Naive thymus-derived CD4-positive, alpha-beta T cell (primary cell): ENCODE measurements at regions of chr17 and their contacts with region 1.

Region 1: DNA sequence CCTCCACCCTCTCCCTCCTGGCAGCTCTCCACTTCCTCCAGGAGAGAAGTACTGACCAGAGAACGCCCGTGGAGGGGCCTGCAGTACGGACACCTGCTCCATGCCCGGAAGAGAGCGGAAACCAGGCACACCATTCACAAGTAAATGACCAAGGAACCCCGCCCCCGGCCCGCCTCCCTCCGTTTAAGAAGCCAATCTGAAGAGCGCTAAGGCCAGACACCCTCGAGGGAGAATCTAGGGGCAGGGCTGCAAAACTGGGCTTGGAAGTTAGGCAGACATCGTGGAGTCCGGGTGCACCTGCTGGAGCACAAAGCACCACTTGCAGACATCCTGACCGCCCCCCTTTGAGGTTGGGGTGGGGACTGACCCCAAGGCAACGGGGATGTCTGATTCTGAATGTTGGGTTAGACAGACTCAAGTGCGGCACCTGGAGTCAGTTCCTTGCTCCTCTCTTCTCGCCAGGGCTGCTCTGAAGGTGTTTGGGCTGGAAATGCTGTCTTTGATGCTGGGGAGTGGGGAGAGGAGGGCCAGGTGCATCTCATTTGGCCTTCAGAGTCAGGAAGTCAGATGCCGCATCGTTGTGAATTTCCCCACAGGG is 964 bp upstream of the FAAP100 start:
- DNase-seq: peak; percentile 34 to 83 (median 75)
- ATAC-seq: peak; percentile 77
- H3K4me3 ChIP-seq: peak overlapping the region; percentile 77
- H3K4me3 Mint-ChIP-seq: peak overlapping the region; percentile 88 to 93 (median 90)
- H3K27ac ChIP-seq: peak overlapping the region; percentile 95
- H3K27ac Mint-ChIP-seq: peak overlapping the region; percentile 69 to 95 (median 92)
- H3K4me1 ChIP-seq: peaks cover 17% of the 10 kb centered on the region in 2 donors
- H3K4me1 Mint-ChIP-seq: peaks cover 16 to 41% (median 36%) of the 10 kb centered on the region in 7 donors
- H3K27me3 ChIP-seq: no peaks in the 10 kb centered on the region
- H3K27me3 Mint-ChIP-seq: no peaks in the 10 kb centered on the region

Region 2: GRCh38 chr17:80263253-80264204 is 1289.6 kb before region 1 on chr17:
- CTCF ChIA-PET with region 1: no interaction called
- POLR2A ChIA-PET with region 1: no interaction called
- intact Hi-C with region 1: loop called in 1 of 2 experiments (anchors 5 kb)
- DNase-seq: peak; percentile 40 to 89 (median 77)
- ATAC-seq: peak; percentile 46
- H3K4me3 ChIP-seq: peak overlapping the region; percentile 75
- H3K4me3 Mint-ChIP-seq: peak overlapping the region; percentile 77 to 99 (median 96)
- H3K27ac ChIP-seq: peak overlapping the region; percentile 93
- H3K27ac Mint-ChIP-seq: peak overlapping the region; percentile 89 to 98 (median 94)
- H3K4me1 ChIP-seq: peaks cover 47 to 54% of the 10 kb centered on the region in 2 donors
- H3K4me1 Mint-ChIP-seq: peaks cover 33 to 57% (median 46%) of the 10 kb centered on the region in 7 donors
- H3K27me3 ChIP-seq: no peaks in the 10 kb centered on the region
- H3K27me3 Mint-ChIP-seq: peaks cover 0 to 2% (median 0%) of the 10 kb centered on the region in 5 donors

Region 3: DNA sequence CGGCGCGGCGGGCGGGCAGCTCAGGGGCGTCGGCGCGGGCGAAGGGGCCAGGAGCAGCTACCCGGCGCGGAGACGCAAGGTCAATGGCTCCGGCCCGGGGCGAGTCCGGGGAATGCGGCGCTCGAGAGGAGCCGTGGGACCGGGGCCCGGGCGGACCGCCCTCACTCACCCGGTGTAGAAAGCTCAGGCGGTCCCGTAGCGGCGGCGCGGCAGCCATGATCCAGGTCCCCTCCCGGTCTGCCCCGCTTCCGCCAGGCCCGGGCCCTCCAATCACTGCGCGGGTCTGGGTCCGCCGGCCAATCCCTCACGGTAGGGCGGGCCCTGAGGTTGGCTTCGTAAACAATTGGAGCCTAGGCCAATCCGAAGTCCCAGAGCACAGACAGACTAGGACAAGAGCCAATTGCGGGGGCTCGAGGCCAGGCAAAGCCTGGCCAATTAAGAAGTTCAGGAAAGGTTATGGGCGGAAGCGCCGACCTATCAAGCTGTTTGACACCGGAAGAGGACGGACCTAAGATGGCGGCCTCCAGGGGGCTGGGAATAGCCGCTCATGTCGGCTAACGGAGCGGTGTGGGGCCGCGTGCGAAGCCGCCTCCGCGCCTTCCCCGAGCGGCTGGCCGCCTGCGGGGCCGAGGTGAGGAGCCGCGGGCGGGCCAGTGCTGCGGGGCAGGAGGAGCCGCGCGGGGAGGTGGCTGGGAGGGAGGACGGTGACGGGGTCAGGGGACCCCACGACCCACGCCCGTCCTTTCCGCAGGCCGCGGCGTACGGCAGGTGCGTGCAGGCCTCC is 314.1 kb before region 1 on chr17 and contains the starts of genes NDUFAF8 and TEPSIN:
- CTCF ChIA-PET with region 1: no interaction called
- POLR2A ChIA-PET with region 1: interaction called, 4 read pairs
- intact Hi-C with region 1: loop called in 1 of 2 experiments (anchors 1 kb)
- DNase-seq: peak; percentile 87 to 98 (median 97)
- ATAC-seq: peak; percentile 98
- H3K4me3 ChIP-seq: peak within 1 kb of the TSS; percentile 71
- H3K4me3 Mint-ChIP-seq: peak within 1 kb of the TSS; percentile 92 to 97 (median 95)
- H3K27ac ChIP-seq: peak within 1 kb of the TSS; percentile 79
- H3K27ac Mint-ChIP-seq: peak within 1 kb of the TSS; percentile 86 to 95 (median 90)
- H3K4me1 ChIP-seq: peaks cover 22 to 24% of the 10 kb centered on the region in 2 donors
- H3K4me1 Mint-ChIP-seq: peaks cover 17 to 51% (median 38%) of the 10 kb centered on the region in 7 donors
- H3K27me3 ChIP-seq: no peaks in the 10 kb centered on the region
- H3K27me3 Mint-ChIP-seq: no peaks in the 10 kb centered on the region
- total RNA-seq, gene NDUFAF8: 34.2 to 45.6 (median 43.5) TPM
- total RNA-seq, gene TEPSIN: 52.6 to 115 (median 90.0) TPM

Region 4: DNA sequence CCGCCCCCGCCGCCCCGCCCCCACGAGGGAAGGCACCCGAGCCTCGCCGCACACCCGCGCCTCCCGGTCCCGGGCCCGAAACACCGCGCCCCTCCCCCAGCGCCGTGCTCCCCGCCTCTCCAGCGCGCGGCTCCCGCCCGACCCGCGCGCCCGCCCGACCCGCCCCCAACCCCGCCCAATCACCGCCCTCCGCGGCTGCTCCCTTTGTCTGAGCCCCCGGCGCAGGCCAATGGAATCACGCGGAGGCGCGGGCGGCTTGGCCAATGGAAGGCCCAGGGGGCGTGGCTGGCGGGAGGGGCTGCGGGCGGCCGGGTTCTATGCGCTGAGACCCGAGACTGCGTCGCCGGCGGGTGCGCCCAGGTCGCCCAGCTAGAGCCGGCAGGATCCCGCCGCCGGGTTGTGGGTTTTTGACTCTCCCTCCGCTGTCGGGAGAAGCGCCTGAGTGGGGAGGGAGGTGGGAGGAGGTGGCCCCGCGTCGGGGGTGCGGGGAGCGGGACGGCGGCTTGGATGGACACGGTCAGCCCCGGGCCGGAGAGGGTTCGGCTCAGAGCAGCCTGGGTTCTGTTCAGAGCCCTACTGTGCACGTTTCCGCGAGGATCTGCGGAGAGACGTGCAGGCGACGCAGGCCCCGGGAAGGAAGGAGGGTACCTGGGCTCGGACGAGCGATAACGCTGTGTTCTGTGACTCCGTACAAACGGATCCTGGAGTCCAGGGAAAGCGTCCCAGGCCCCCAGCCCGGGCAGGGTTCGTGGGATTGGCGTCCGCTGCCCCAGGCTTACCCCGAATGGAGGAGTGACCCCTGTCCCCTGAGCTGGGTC is 206.8 kb before region 1 on chr17:
- CTCF ChIA-PET with region 1: no interaction called
- POLR2A ChIA-PET with region 1: no interaction called
- intact Hi-C with region 1: loop called in 1 of 2 experiments (anchors 2 kb)
- DNase-seq: peak; percentile 88 to 94 (median 92)
- ATAC-seq: peak; percentile 97
- H3K4me3 ChIP-seq: peak overlapping the region; percentile 44
- H3K4me3 Mint-ChIP-seq: peak overlapping the region; percentile 16 to 74 (median 58)
- H3K27ac ChIP-seq: no peak overlapping the region
- H3K27ac Mint-ChIP-seq: no peak overlapping the region
- H3K4me1 ChIP-seq: peaks cover 17 to 31% of the 10 kb centered on the region in 2 donors
- H3K4me1 Mint-ChIP-seq: peaks cover 10 to 29% (median 16%) of the 10 kb centered on the region in 7 donors
- H3K27me3 ChIP-seq: peaks cover 3 to 32% of the 10 kb centered on the region in 2 donors
- H3K27me3 Mint-ChIP-seq: peaks cover 26 to 57% (median 32%) of the 10 kb centered on the region in 5 donors

Region 5: DNA sequence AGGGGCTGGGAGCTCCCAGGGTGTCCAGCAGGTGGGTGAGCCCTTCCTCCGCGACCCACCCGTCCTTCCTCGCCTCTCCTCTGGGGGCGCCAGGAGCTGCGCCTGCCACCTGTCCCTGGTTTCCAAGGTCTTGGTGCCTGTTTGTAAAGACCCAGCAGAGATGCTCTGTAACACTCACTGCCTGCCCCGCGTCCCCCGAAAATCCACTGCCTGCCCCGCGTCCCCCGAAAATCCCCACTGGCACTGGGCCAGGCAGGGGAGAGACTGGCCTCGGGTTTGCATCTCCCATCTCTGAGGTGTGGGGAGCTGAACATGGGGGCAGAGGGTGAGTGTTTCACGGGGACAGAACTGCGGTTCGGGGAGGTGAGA is 112.3 kb before region 1 on chr17:
- CTCF ChIA-PET with region 1: no interaction called
- POLR2A ChIA-PET with region 1: no interaction called
- intact Hi-C with region 1: no loop called
- DNase-seq: no peak
- ATAC-seq: no peak
- H3K4me3 ChIP-seq: no peak overlapping the region
- H3K4me3 Mint-ChIP-seq: no peak overlapping the region
- H3K27ac ChIP-seq: no peak overlapping the region
- H3K27ac Mint-ChIP-seq: no peak overlapping the region
- H3K4me1 ChIP-seq: no peaks in the 10 kb centered on the region
- H3K4me1 Mint-ChIP-seq: peaks cover 0 to 3% (median 0%) of the 10 kb centered on the region in 7 donors
- H3K27me3 ChIP-seq: no peaks in the 10 kb centered on the region
- H3K27me3 Mint-ChIP-seq: peaks cover 0 to 9% (median 0%) of the 10 kb centered on the region in 5 donors

Region 6: DNA sequence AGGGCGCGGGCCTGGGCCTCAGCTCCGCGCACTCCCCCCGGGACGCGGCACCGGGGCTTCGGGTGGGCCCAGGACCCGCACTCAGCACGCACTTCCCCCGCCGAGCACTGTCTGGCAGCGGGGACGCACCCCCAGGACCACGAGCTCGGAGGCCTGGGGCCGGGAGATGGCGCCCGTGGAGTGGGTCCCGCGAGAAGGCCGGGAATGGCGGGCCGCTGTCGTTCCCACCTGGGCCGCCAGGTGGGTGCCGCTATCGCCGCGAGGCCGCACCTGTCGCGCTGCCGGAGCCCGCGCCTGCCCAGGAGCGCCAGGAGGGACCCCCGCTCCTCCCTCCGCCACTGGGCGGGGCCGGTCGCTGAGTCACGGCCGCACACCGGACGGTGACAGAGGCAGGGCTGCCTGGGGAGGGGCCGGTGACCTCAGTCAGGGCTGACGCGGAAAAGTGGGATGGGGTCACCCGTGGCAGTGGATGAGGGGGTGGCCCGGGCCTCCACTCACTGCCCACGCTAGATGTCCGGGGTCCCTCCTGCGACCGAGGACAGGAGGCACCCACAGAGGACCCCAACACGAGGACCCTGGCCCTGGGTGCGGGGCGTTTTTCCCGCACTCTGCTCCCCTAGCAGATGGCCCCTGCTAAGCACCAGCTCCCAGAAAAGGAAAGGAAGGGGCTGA is 33.7 kb before region 1 on chr17:
- CTCF ChIA-PET with region 1: interaction called, 7 read pairs
- POLR2A ChIA-PET with region 1: interaction called, 65 read pairs
- intact Hi-C with region 1: loop called (anchors 1 kb)
- DNase-seq: peak; percentile 59 to 76 (median 70)
- ATAC-seq: peak; percentile 74
- H3K4me3 ChIP-seq: peak overlapping the region; percentile 51
- H3K4me3 Mint-ChIP-seq: peak overlapping the region in 3 of 10 donors; percentile 57 to 84 (median 57)
- H3K27ac ChIP-seq: peak overlapping the region; percentile 52
- H3K27ac Mint-ChIP-seq: no peak overlapping the region
- H3K4me1 ChIP-seq: peaks cover 0 to 29% of the 10 kb centered on the region in 2 donors
- H3K4me1 Mint-ChIP-seq: peaks cover 8 to 28% (median 23%) of the 10 kb centered on the region in 7 donors
- H3K27me3 ChIP-seq: no peaks in the 10 kb centered on the region
- H3K27me3 Mint-ChIP-seq: peaks cover 0 to 21% (median 0%) of the 10 kb centered on the region in 5 donors

Region 7: DNA sequence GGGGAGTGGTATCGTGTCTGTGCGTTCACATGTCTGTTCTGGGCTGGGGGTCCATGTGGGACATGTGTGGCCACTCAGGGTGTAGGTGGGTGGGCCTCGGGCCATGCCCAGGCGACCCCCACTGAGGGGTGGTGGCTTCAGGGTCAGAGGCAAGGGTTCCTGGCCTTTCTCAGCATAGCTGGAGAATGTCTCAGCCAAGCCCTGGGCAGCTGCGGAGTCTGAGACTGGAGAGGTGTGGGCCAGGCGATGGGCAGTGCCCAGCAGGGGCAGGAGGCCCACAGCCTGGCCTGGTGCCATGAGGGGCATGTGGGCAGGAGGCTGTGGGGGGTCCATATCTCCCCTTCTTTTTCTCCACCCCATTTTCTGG is 23.7 kb before region 1 on chr17:
- CTCF ChIA-PET with region 1: no interaction called
- POLR2A ChIA-PET with region 1: no interaction called
- intact Hi-C with region 1: no loop called
- DNase-seq: no peak
- ATAC-seq: no peak
- H3K4me3 ChIP-seq: no peak overlapping the region
- H3K4me3 Mint-ChIP-seq: no peak overlapping the region
- H3K27ac ChIP-seq: no peak overlapping the region
- H3K27ac Mint-ChIP-seq: no peak overlapping the region
- H3K4me1 ChIP-seq: no peaks in the 10 kb centered on the region
- H3K4me1 Mint-ChIP-seq: peaks cover 0 to 1% (median 0%) of the 10 kb centered on the region in 7 donors
- H3K27me3 ChIP-seq: no peaks in the 10 kb centered on the region
- H3K27me3 Mint-ChIP-seq: peaks cover 0 to 16% (median 4%) of the 10 kb centered on the region in 5 donors

Region 8: GRCh38 chr17:81636505-81637288 is 83.6 kb after region 1 on chr17 and contains the starts of genes NPLOC4 and TSPAN10:
- CTCF ChIA-PET with region 1: no interaction called
- POLR2A ChIA-PET with region 1: no interaction called
- intact Hi-C with region 1: loop called in 1 of 2 experiments (anchors 1 kb)
- DNase-seq: peak; percentile 62 to 94 (median 80)
- ATAC-seq: peak; percentile 95
- H3K4me3 ChIP-seq: peak within 1 kb of the TSS; percentile 86
- H3K4me3 Mint-ChIP-seq: peak within 1 kb of the TSS; percentile 91 to 98 (median 95)
- H3K27ac ChIP-seq: peak within 1 kb of the TSS; percentile 87
- H3K27ac Mint-ChIP-seq: peak within 1 kb of the TSS; percentile 25 to 94 (median 89)
- H3K4me1 ChIP-seq: peaks cover 10 to 12% of the 10 kb centered on the region in 2 donors
- H3K4me1 Mint-ChIP-seq: peaks cover 13 to 37% (median 26%) of the 10 kb centered on the region in 7 donors
- H3K27me3 ChIP-seq: no peaks in the 10 kb centered on the region
- H3K27me3 Mint-ChIP-seq: no peaks in the 10 kb centered on the region
- total RNA-seq, gene NPLOC4: 77.7 to 125 (median 93.6) TPM
- total RNA-seq, gene TSPAN10: 0.32 to 1.9 (median 0.51) TPM

Region 9: GRCh38 chr17:81702971-81703746 is 150.0 kb after region 1 on chr17 and contains the start of gene MRPL12:
- CTCF ChIA-PET with region 1: no interaction called
- POLR2A ChIA-PET with region 1: no interaction called
- intact Hi-C with region 1: loop called (anchors 2 to 5 kb)
- DNase-seq: peak; percentile 75 to 87 (median 84)
- ATAC-seq: peak; percentile 96
- H3K4me3 ChIP-seq: peak within 1 kb of the TSS; percentile 91
- H3K4me3 Mint-ChIP-seq: peak within 1 kb of the TSS; percentile 83 to 94 (median 90)
- H3K27ac ChIP-seq: peak within 1 kb of the TSS; percentile 95
- H3K27ac Mint-ChIP-seq: peak within 1 kb of the TSS; percentile 84 to 96 (median 92)
- H3K4me1 ChIP-seq: peaks cover 23 to 24% of the 10 kb centered on the region in 2 donors
- H3K4me1 Mint-ChIP-seq: peaks cover 21 to 38% (median 26%) of the 10 kb centered on the region in 7 donors
- H3K27me3 ChIP-seq: no peaks in the 10 kb centered on the region
- H3K27me3 Mint-ChIP-seq: no peaks in the 10 kb centered on the region
- total RNA-seq, gene MRPL12: 21.3 to 83.8 (median 26.6) TPM